Thyroid gland (tissue), 4 donors: ENCODE measurements at regions of chr18 and their contacts with region 1.

Region 1: DNA sequence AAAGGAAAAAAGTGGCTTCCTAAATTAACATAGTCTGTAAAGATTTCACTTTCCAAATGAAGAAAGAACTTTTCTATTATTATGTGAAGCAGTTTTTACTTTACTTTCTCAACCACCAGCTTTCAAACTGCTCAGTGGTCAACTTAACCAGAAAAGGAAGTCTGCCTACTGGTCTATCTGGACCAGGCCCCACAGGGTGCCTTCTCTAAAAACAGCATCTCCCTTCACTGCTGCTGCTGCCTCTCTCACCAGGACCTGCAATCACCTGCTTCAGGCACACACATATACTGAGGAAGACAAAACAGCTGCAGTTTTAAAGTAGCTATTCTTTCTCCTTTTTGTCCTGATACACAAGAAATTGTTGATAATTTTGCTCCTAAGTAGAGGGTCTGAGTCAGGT is 221.3 kb upstream of the DCC start:
- DNase-seq: no peak
- H3K4me3 ChIP-seq: no peak overlapping the region
- H3K27ac ChIP-seq: no peak overlapping the region
- H3K4me1 ChIP-seq: no peaks in the 10 kb centered on the region
- H3K27me3 ChIP-seq: no peaks in the 10 kb centered on the region
- CTCF ChIP-seq: no peak
- POLR2A ChIP-seq: no peak

Region 2: DNA sequence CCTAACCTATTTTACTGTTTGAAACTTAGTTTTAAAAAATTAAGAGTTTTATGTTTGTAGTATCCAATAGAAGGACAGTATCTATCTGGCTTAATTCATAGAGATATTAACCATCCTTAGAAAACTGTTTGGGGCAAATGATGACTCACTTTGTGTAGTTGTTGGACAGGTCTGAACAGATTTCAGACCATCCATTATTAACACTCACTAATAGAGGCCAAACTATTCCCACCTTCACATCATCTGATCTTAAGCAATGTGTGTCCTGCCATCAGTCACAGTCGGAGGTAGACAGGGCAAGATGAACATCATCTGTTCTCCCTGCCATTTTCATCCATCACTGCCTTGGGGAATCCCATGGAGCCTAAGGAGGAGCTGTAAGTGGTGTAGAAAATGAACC is 56.7 kb after region 1 on chr18:
- intact Hi-C with region 1: loop called (anchors 10 kb)
- DNase-seq: no peak
- H3K4me3 ChIP-seq: no peak overlapping the region
- H3K27ac ChIP-seq: no peak overlapping the region
- H3K4me1 ChIP-seq: no peaks in the 10 kb centered on the region
- H3K27me3 ChIP-seq: no peaks in the 10 kb centered on the region
- CTCF ChIP-seq: no peak
- POLR2A ChIP-seq: no peak